Naive thymus-derived CD4-positive, alpha-beta T cell (primary cell): ENCODE measurements at regions of chr22 and their contacts with region 1.

Region 1: GRCh38 chr22:50250555-50251476 is at the start of gene HDAC10:
- DNase-seq: peak; percentile 60 to 86 (median 71)
- ATAC-seq: peak; percentile 78
- H3K4me3 ChIP-seq: peak within 1 kb of the TSS; percentile 71
- H3K4me3 Mint-ChIP-seq: peak within 1 kb of the TSS; percentile 61 to 88 (median 80)
- H3K27ac ChIP-seq: peak within 1 kb of the TSS; percentile 71
- H3K27ac Mint-ChIP-seq: peak within 1 kb of the TSS in 7 of 9 donors; percentile 31 to 80 (median 65)
- H3K4me1 ChIP-seq: peaks cover 25 to 38% of the 10 kb centered on the region in 2 donors
- H3K4me1 Mint-ChIP-seq: peaks cover 4 to 26% (median 17%) of the 10 kb centered on the region in 7 donors
- H3K27me3 ChIP-seq: no peaks in the 10 kb centered on the region
- H3K27me3 Mint-ChIP-seq: no peaks in the 10 kb centered on the region
- total RNA-seq, gene HDAC10: 95.9 to 139 (median 105) TPM

Region 2: DNA sequence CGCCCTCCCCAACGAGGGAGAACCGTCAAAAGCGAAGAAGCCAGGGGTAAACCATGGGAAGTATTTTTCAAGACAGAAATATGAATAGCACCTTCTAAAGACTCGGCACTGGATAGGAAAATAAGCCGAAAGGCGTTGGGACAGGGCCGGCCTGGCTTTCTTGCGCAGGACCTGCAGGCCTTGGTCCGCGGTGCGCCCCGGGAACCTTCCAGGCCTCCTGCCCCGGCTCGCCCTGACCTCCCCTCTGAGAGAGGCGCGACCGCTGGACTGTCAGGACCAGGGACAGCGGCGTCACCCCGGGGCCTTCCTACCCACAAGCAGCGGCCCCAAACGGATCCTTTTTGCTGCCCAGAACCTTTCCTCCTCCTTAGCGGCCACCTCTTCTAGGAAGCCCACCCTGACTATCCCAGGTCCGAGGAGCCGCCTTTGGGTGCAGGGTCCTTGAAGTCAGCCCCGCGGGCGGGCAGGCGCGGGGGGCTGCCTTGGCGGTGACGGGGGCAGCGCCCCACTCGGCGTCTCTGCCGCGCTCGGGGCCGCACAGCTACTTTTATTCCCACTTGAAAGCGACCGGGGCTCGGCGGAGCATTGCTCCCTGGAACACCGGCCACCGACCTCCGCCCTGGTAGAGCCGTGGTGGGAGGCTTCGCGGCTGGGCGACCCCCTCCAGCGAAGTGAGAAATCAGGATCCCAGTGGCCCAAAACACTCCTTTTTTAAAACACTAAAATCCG is 20.0 kb after region 1 on chr22:
- CTCF ChIA-PET with region 1: interaction called, 3 read pairs
- POLR2A ChIA-PET with region 1: interaction called, 7 read pairs
- intact Hi-C with region 1: loop called (anchors 1 kb)
- DNase-seq: peak; percentile 44 to 80 (median 67)
- ATAC-seq: peak; percentile 72
- H3K4me3 ChIP-seq: peak overlapping the region; percentile 68
- H3K4me3 Mint-ChIP-seq: peak overlapping the region; percentile 56 to 82 (median 74)
- H3K27ac ChIP-seq: peak overlapping the region; percentile 23
- H3K27ac Mint-ChIP-seq: peak overlapping the region in 2 of 9 donors; percentile 33 to 48
- H3K4me1 ChIP-seq: peaks cover 3 to 18% of the 10 kb centered on the region in 2 donors
- H3K4me1 Mint-ChIP-seq: peaks cover 5 to 20% (median 13%) of the 10 kb centered on the region in 7 donors
- H3K27me3 ChIP-seq: no peaks in the 10 kb centered on the region
- H3K27me3 Mint-ChIP-seq: peaks cover 0 to 16% (median 0%) of the 10 kb centered on the region in 5 donors

Region 3: GRCh38 chr22:50314455-50315288 is 63.9 kb after region 1 on chr22:
- CTCF ChIA-PET with region 1: no interaction called
- POLR2A ChIA-PET with region 1: interaction called, 9 read pairs
- intact Hi-C with region 1: loop called in 1 of 2 experiments (anchors 5 kb)
- DNase-seq: peak; percentile 44 to 71 (median 60)
- ATAC-seq: peak; percentile 94
- H3K4me3 ChIP-seq: peak overlapping the region; percentile 53
- H3K4me3 Mint-ChIP-seq: peak overlapping the region; percentile 76 to 92 (median 87)
- H3K27ac ChIP-seq: peak overlapping the region; percentile 64
- H3K27ac Mint-ChIP-seq: peak overlapping the region; percentile 79 to 97 (median 88)
- H3K4me1 ChIP-seq: peaks cover 14 to 17% of the 10 kb centered on the region in 2 donors
- H3K4me1 Mint-ChIP-seq: peaks cover 9 to 18% (median 12%) of the 10 kb centered on the region in 7 donors
- H3K27me3 ChIP-seq: no peaks in the 10 kb centered on the region
- H3K27me3 Mint-ChIP-seq: no peaks in the 10 kb centered on the region

Region 4: GRCh38 chr22:50691521-50691920 is 440.7 kb after region 1 on chr22:
- CTCF ChIA-PET with region 1: interaction called, 4 read pairs
- POLR2A ChIA-PET with region 1: no interaction called
- intact Hi-C with region 1: loop called in 1 of 2 experiments (anchors 1 kb)
- DNase-seq: peak in 6 of 9 donors; percentile 16 to 45 (median 34)
- ATAC-seq: no peak
- H3K4me3 ChIP-seq: no peak overlapping the region
- H3K4me3 Mint-ChIP-seq: no peak overlapping the region
- H3K27ac ChIP-seq: no peak overlapping the region
- H3K27ac Mint-ChIP-seq: no peak overlapping the region
- H3K4me1 ChIP-seq: no peaks in the 10 kb centered on the region
- H3K4me1 Mint-ChIP-seq: peaks cover 0 to 7% (median 0%) of the 10 kb centered on the region in 7 donors
- H3K27me3 ChIP-seq: no peaks in the 10 kb centered on the region
- H3K27me3 Mint-ChIP-seq: peaks cover 0 to 23% (median 0%) of the 10 kb centered on the region in 5 donors